GM12878 (cell line): ENCODE measurements at regions of chr6 and their contacts with region 1.

Region 1: DNA sequence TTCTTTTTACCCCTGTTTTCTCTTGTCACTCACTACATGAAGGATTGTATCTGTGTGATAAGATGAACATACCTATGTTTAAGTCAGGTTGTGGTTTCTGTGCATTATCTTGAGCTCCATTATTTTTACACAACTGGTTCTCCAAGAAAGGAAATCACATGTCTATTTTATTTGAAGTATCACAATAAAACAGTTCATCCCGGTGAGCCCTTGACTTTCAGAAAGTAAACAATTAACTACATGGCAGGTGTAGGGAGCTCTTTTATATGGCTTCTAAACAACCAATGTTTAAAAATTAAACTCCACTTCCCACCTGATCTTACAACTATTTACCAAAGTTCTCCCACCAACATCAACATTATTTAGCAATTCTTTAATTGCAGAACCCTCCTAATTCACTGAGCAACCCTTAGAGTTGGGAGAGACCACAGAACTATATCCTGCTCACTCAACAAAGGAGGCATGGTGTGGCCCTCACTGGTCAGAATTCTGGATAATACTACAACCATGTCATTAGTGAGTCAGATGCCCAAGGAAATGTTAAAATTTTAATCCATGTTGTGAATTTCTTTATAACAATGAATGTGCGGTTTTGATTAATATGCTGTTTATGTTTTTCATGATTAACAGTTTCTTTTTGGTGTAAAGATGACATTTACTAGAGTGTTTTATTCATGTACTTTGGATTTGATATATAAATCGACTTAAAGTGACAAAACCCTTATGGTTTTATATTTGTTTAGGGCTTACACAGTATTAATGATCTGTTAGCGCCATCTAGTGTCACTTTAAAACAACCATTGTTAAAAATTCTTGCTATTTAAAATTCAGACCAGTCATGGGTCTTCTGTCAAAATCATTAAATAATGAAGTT is 50.0 kb upstream of the SCGN start:
- DNase-seq: no peak
- ATAC-seq: 0 out of 3 replicates have a peak, but pooled peaks have one; percentile 39
- H3K4me3 ChIP-seq: no peak overlapping the region
- H3K27ac ChIP-seq: no peak overlapping the region
- H3K4me1 ChIP-seq: no peaks in the 10 kb centered on the region
- H3K27me3 ChIP-seq: no peaks in the 10 kb centered on the region
- CTCF ChIP-seq: peak; percentile 24 to 69 (median 45); a peak in 5 of 6 replicates
- EP300 ChIP-seq: no peak
- POLR2A ChIP-seq: no peak
- RAD21 ChIP-seq: peak; percentile 72

Region 2: GRCh38 chr6:25085756-25086155 is 516.3 kb before region 1 on chr6:
- CTCF ChIA-PET with region 1: no interaction called
- POLR2A ChIA-PET with region 1: no interaction called
- RAD21 ChIA-PET with region 1: no interaction called
- SMC1A ChIA-PET with region 1: no interaction called
- in situ Hi-C with region 1: no loop called
- intact Hi-C with region 1: no loop called
- DNase-seq: no peak
- ATAC-seq: peak; percentile 62
- H3K4me3 ChIP-seq: no peak overlapping the region
- H3K27ac ChIP-seq: no peak overlapping the region
- H3K4me1 ChIP-seq: no peaks in the 10 kb centered on the region; the same call in 1 of the 2 replicates
- H3K27me3 ChIP-seq: no peaks in the 10 kb centered on the region
- CTCF ChIP-seq: no peak
- EP300 ChIP-seq: no peak
- POLR2A ChIP-seq: no peak
- RAD21 ChIP-seq: no peak

Region 3: DNA sequence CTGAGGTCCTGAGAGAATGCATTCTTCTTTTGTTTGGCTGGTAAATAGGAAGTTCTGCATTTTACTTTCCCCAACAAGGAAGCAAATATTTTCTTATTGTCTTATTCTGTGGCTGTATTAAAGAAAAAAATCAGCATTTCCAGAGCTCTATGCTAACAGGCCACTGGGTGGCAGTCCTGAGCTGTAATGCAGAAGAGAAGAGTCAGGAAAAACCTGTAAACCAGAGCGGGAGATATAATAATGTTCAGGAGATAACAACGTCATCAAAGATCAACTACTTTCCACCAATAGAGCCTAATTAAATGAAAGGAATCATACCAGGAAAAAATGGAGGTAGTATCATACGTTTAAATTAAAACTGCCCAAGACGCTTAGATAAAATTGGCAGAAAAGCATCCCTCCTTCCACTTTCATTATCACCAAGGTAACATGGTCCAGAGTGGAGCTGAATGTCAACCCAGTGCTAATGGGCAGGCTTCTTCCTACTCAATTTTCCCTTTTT is 378.5 kb before region 1 on chr6:
- CTCF ChIA-PET with region 1: interaction called, 36 read pairs
- POLR2A ChIA-PET with region 1: no interaction called
- RAD21 ChIA-PET with region 1: interaction called, 3 read pairs
- SMC1A ChIA-PET with region 1: interaction called, 5 read pairs
- in situ Hi-C with region 1: no loop called
- intact Hi-C with region 1: loop called (anchors 1 kb)
- DNase-seq: peak; percentile 19
- ATAC-seq: peak; percentile 81
- H3K4me3 ChIP-seq: no peak overlapping the region; the same call in 1 of the 2 replicates
- H3K27ac ChIP-seq: no peak overlapping the region
- H3K4me1 ChIP-seq: no peaks in the 10 kb centered on the region
- H3K27me3 ChIP-seq: no peaks in the 10 kb centered on the region; a peak in 1 of 4 replicates
- CTCF ChIP-seq: peak; percentile 82 to 90 (median 84)
- EP300 ChIP-seq: 0 out of 4 replicates have a peak, but pooled peaks of 1 of the 2 experiments have one; percentile 11
- POLR2A ChIP-seq: no peak
- RAD21 ChIP-seq: peak; percentile 91

Region 4: GRCh38 chr6:25583099-25583498 is 18.9 kb before region 1 on chr6:
- CTCF ChIA-PET with region 1: interaction called, 8 read pairs
- POLR2A ChIA-PET with region 1: interaction called, 3 read pairs
- RAD21 ChIA-PET with region 1: interaction called, 4 read pairs
- SMC1A ChIA-PET with region 1: interaction called, 14 read pairs
- in situ Hi-C with region 1: no loop called
- intact Hi-C with region 1: no loop called
- DNase-seq: no peak
- ATAC-seq: no peak
- H3K4me3 ChIP-seq: no peak overlapping the region
- H3K27ac ChIP-seq: no peak overlapping the region
- H3K4me1 ChIP-seq: peaks cover 5% of the 10 kb centered on the region
- H3K27me3 ChIP-seq: no peaks in the 10 kb centered on the region
- CTCF ChIP-seq: no peak
- EP300 ChIP-seq: no peak
- POLR2A ChIP-seq: no peak
- RAD21 ChIP-seq: no peak

Region 5: GRCh38 chr6:25590986-25591385 is 11.1 kb before region 1 on chr6:
- CTCF ChIA-PET with region 1: interaction called, 13 read pairs
- POLR2A ChIA-PET with region 1: interaction called, 3 read pairs
- RAD21 ChIA-PET with region 1: interaction called, 4 read pairs
- SMC1A ChIA-PET with region 1: interaction called, 14 read pairs
- in situ Hi-C with region 1: no loop called
- intact Hi-C with region 1: no loop called
- DNase-seq: no peak
- ATAC-seq: no peak
- H3K4me3 ChIP-seq: no peak overlapping the region
- H3K27ac ChIP-seq: no peak overlapping the region
- H3K4me1 ChIP-seq: no peaks in the 10 kb centered on the region
- H3K27me3 ChIP-seq: no peaks in the 10 kb centered on the region
- CTCF ChIP-seq: no peak
- EP300 ChIP-seq: no peak
- POLR2A ChIP-seq: no peak
- RAD21 ChIP-seq: no peak

Region 6: GRCh38 chr6:25617997-25618396 is 16.0 kb after region 1 on chr6:
- CTCF ChIA-PET with region 1: interaction called, 10 read pairs
- POLR2A ChIA-PET with region 1: no interaction called
- RAD21 ChIA-PET with region 1: interaction called, 3 read pairs
- SMC1A ChIA-PET with region 1: interaction called, 4 read pairs
- in situ Hi-C with region 1: no loop called
- intact Hi-C with region 1: no loop called
- DNase-seq: no peak
- ATAC-seq: peak; percentile 84
- H3K4me3 ChIP-seq: no peak overlapping the region
- H3K27ac ChIP-seq: no peak overlapping the region
- H3K4me1 ChIP-seq: no peaks in the 10 kb centered on the region
- H3K27me3 ChIP-seq: no peaks in the 10 kb centered on the region
- CTCF ChIP-seq: no peak
- EP300 ChIP-seq: 0 out of 4 replicates have a peak, but pooled peaks of 1 of the 2 experiments have one; percentile 53
- POLR2A ChIP-seq: no peak
- RAD21 ChIP-seq: no peak

Region 7: DNA sequence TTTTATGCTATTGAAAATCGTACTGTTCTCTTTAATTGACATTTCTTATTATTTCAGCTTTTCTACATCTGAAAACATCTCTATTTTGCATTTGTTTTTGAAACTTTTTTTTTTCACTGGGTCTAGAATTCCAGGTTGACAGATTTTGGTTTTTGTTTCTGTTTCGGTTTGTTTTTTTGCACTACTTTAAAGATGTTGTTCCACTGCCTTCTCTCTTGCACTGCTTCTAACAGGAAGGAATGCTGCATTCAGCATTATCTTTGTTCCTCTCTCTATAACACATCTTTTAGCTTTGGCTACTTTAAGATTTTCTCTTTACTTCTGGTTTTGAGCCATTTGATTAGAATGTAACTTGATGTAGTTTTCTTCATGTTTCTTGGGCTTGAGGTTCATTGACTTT is 249.9 kb after region 1 on chr6:
- CTCF ChIA-PET with region 1: no interaction called
- POLR2A ChIA-PET with region 1: no interaction called
- RAD21 ChIA-PET with region 1: no interaction called
- SMC1A ChIA-PET with region 1: no interaction called
- in situ Hi-C with region 1: no loop called
- intact Hi-C with region 1: no loop called
- DNase-seq: no peak
- ATAC-seq: no peak
- H3K4me3 ChIP-seq: no peak overlapping the region
- H3K27ac ChIP-seq: no peak overlapping the region
- H3K4me1 ChIP-seq: no peaks in the 10 kb centered on the region
- H3K27me3 ChIP-seq: no peaks in the 10 kb centered on the region
- CTCF ChIP-seq: no peak
- EP300 ChIP-seq: no peak
- POLR2A ChIP-seq: no peak
- RAD21 ChIP-seq: no peak